ENCODE measurements at regions of chr15 and their contacts with region 1.

Region 1: DNA sequence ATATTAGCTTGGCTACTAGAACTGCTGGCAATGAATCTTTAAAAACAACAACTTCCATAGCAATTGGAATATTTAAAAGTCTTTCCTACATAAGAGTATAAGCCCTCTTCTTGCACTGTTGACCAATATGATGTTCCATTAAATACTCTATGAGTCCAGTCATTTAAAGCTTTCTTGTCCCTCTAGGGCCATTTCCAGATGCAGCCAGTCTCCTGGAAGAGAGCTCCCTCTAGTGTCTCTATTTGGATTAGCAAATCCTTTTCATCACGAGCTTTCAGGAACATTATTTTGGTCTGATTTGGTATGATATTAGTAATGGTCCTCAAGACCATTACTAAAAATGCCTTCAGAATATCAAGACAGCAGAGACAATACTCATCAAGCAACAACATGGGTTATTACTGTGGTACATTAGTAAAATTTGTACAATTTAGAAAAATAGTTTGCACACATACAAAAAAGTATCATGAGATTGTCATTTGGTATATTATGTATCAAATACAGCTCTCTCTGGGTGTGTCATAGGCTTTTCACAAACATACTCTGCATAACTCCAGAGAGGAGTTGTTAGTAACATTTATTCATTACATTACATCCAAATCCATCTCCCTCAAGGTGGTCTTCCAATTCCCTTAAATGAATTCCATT is 101.3 kb downstream of the DPH6 start:
- DNase-seq: no peak
- H3K4me3 ChIP-seq: no peak overlapping the region
- H3K27ac ChIP-seq: no peak overlapping the region
- H3K4me1 ChIP-seq: peaks cover 0 to 5% (median 0%) of the 10 kb centered on the region in 4 donors
- H3K27me3 ChIP-seq: no peaks in the 10 kb centered on the region
- CTCF ChIP-seq: peak; percentile 72 to 82 (median 75)
- EP300 ChIP-seq: no peak
- POLR2A ChIP-seq: no peak

Region 2: GRCh38 chr15:35078221-35078915 is 366.3 kb before region 1 on chr15:
- in situ Hi-C with region 1: loop called in 3 of 4 experiments (anchors 10 to 25 kb)
- intact Hi-C with region 1: loop called (anchors 10 kb)
- DNase-seq: peak; percentile 14
- H3K4me3 ChIP-seq: no peak overlapping the region
- H3K27ac ChIP-seq: no peak overlapping the region
- H3K4me1 ChIP-seq: no peaks in the 10 kb centered on the region
- H3K27me3 ChIP-seq: no peaks in the 10 kb centered on the region
- CTCF ChIP-seq: peak; percentile 67 to 82 (median 80)
- EP300 ChIP-seq: no peak
- POLR2A ChIP-seq: no peak

Region 3: DNA sequence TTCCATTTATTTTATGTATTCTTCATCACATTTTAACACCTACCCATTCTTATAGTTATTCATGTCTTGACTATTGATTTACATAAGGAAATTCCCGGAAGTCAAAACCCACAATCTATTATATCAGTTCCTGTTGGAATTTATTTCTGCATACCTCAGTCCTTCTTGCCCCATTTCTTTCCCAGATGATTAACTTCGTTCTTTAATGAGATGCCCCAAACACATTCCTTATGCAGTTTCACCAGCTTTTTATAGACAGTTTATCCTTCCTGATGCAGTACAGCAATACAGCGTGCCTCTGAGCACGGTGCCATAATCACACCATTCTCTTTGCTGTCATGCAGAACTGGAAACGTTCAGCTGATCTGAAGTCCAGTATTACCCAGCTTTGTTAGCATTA is 183.7 kb before region 1 on chr15:
- in situ Hi-C with region 1: no loop called
- intact Hi-C with region 1: no loop called
- DNase-seq: no peak
- H3K4me3 ChIP-seq: no peak overlapping the region
- H3K27ac ChIP-seq: no peak overlapping the region
- H3K4me1 ChIP-seq: no peaks in the 10 kb centered on the region
- H3K27me3 ChIP-seq: no peaks in the 10 kb centered on the region
- CTCF ChIP-seq: no peak
- EP300 ChIP-seq: no peak
- POLR2A ChIP-seq: no peak

Region 4: DNA sequence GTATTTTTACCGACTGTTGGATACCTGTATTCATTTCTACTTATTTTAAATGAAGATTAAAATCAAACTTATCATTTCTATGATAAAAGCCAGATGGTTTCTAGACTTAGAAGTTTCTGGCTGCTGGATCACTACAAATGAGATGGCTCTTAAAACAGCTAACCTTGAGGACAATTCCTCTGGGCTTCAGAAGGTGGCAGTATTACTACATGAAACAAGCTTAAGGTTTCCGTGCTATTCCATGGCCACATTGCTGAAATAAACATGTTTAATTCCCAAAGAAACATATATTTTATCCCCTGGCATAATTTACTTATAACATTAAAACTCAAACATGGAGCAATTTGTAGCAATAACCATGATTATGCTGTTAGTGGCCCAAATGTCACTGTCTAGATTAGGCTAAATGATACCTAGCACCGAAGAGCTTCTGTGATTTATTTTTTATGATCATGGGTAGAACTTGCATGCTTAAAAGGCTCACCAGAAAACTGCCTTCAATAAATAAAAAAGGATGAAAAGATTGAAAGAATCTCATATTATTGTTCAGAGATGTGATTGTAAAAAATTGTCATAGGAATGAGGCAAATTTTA is 155.6 kb before region 1 on chr15:
- in situ Hi-C with region 1: loop called (anchors 10 to 25 kb)
- intact Hi-C with region 1: no loop called
- DNase-seq: no peak
- H3K4me3 ChIP-seq: no peak overlapping the region
- H3K27ac ChIP-seq: no peak overlapping the region
- H3K4me1 ChIP-seq: peaks cover 5 to 34% (median 13%) of the 10 kb centered on the region in 4 donors
- H3K27me3 ChIP-seq: no peaks in the 10 kb centered on the region
- CTCF ChIP-seq: peak; percentile 64 to 77 (median 74)
- EP300 ChIP-seq: no peak
- POLR2A ChIP-seq: no peak

Region 5: DNA sequence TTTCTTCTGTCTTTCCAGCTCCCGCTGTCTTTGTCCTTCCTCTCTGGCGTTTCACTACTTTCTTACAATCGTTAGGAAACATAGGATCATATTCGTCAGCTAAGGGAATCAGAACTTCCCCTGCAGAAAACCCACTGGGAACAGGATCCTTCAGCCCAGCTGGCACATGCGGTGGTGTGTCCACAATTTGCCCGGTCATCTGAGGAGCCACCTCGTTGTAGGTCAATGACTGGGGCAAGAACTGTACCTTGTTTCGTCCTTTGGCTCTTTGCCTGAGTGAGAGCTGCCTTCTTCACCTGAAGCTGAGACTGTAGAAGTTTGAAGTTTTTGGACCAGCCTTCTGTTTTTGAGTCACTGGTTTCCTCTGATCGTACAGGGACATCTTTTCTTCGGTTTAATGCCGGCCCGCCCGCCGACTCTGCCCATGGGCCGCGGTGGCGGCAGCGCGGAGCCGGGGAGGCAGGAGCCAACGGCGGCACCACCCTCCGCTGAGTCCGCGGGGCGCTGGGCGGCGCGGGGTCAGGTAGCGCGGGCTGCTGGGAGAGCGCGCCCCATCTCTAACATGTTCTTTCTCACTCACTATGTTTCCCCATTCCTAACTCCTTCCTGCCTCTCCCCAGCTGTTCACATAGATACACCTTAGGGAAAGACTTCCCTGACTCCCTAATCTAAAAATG is 145.5 kb before region 1 on chr15:
- in situ Hi-C with region 1: loop called in 3 of 4 experiments (anchors 25 kb)
- intact Hi-C with region 1: loop called (anchors 5 kb)
- DNase-seq: no peak
- H3K4me3 ChIP-seq: no peak overlapping the region
- H3K27ac ChIP-seq: no peak overlapping the region
- H3K4me1 ChIP-seq: no peaks in the 10 kb centered on the region
- H3K27me3 ChIP-seq: no peaks in the 10 kb centered on the region
- CTCF ChIP-seq: no peak
- EP300 ChIP-seq: no peak
- POLR2A ChIP-seq: no peak